ENCODE measurements at regions of chr2 and their contacts with region 1.

Region 1: GRCh38 chr2:219057709-219058540 is 2.8 kb downstream of the IHH start:
- DNase-seq: peak in 1 of 2 experiments; percentile 60
- ATAC-seq: peak; percentile 72 to 86
- H3K4me3 ChIP-seq: peak overlapping the region; percentile 53; the same call in 2 of the 3 replicates
- H3K27ac ChIP-seq: no peak overlapping the region
- H3K4me1 ChIP-seq: peaks cover 26% of the 10 kb centered on the region
- CTCF ChIP-seq: peak; percentile 80
- EP300 ChIP-seq: no peak
- POLR2A ChIP-seq: no peak
- RAD21 ChIP-seq: peak; percentile 80 to 91

Region 2: GRCh38 chr2:219029829-219030165 is 28.1 kb before region 1 on chr2:
- CTCF ChIA-PET with region 1: interaction called, 84 read pairs
- POLR2A ChIA-PET with region 1: no interaction called
- DNase-seq: peak; percentile 76 to 80
- ATAC-seq: peak; percentile 89 to 97; a peak in 5 of 6 replicates
- H3K4me3 ChIP-seq: no peak overlapping the region
- H3K27ac ChIP-seq: no peak overlapping the region
- H3K4me1 ChIP-seq: no peaks in the 10 kb centered on the region
- CTCF ChIP-seq: peak; percentile 88
- EP300 ChIP-seq: no peak
- POLR2A ChIP-seq: no peak
- RAD21 ChIP-seq: peak; percentile 82 to 87

Region 3: DNA sequence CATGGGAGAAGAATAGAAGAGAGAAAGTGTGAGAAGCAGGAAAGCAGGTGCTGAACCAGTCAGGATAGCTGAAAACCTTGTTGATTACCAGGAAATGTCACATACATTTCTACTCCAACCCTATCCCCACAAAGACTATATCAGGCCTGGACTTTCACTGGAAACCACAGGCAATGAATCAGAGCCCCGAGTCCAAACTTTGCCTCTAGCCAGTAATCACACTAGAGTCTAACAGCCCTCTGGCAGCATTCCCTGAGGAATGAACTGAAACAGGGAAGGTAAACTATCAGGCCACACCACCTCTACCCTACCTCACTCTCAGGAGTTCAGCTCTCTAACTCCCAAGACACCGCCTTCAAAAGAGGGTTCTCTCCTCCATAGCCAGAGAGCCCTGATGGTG is 21.5 kb after region 1 on chr2:
- CTCF ChIA-PET with region 1: interaction called, 182 read pairs
- POLR2A ChIA-PET with region 1: no interaction called
- DNase-seq: no peak
- ATAC-seq: no peak
- H3K4me3 ChIP-seq: no peak overlapping the region
- H3K27ac ChIP-seq: no peak overlapping the region
- H3K4me1 ChIP-seq: no peaks in the 10 kb centered on the region
- CTCF ChIP-seq: no peak
- EP300 ChIP-seq: no peak
- POLR2A ChIP-seq: no peak
- RAD21 ChIP-seq: no peak

Region 4: DNA sequence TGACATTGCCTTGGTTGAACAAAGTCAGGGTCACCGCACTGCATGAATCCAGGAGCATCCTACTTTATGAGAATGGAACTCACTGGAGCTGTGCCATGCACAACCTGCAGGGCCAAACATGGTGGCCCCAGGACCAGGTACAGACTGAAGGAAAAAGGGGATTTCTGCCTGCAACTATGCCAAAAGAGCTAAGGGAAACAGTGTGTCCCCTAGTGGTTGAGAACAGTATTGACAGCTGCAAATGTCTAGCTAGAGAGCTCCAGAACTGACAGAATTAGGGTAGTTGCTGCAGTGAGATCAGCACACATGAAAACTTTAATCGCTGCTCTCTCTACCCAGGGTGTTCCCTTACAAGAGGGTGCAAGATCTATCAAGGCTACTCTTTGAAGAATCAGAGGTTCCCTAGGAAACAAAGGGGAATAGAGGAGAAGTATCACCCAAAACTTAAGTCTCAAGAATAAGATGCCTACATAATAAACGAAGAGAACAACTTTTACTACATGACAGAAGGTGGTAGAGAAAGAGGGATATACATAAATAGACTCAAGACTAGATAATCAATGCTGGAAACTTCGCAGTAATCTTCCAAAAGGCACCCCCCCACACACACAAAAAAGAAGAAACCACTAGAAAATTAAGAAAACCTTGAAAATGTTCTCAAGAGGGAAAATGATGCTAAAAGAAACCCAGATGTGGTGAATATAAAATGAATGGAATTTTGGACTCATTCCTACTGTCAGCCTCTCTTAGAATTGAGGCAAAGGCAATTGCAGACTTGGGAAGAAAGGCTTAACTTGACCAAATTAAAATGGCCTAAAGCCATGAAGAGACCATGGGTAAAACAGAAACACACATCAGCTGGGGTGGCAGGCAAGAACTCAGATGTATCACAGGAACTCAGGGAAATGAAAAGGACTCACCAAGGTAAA is 46.4 kb after region 1 on chr2:
- CTCF ChIA-PET with region 1: interaction called, 13 read pairs
- POLR2A ChIA-PET with region 1: interaction called, 3 read pairs
- DNase-seq: peak; percentile 28 to 60
- ATAC-seq: peak; percentile 88 to 95
- H3K4me3 ChIP-seq: no peak overlapping the region
- H3K27ac ChIP-seq: no peak overlapping the region
- H3K4me1 ChIP-seq: no peaks in the 10 kb centered on the region
- CTCF ChIP-seq: peak; percentile 64
- EP300 ChIP-seq: no peak
- POLR2A ChIP-seq: no peak
- RAD21 ChIP-seq: peak; percentile 41 to 47; a peak in 4 of 5 replicates

Region 5: DNA sequence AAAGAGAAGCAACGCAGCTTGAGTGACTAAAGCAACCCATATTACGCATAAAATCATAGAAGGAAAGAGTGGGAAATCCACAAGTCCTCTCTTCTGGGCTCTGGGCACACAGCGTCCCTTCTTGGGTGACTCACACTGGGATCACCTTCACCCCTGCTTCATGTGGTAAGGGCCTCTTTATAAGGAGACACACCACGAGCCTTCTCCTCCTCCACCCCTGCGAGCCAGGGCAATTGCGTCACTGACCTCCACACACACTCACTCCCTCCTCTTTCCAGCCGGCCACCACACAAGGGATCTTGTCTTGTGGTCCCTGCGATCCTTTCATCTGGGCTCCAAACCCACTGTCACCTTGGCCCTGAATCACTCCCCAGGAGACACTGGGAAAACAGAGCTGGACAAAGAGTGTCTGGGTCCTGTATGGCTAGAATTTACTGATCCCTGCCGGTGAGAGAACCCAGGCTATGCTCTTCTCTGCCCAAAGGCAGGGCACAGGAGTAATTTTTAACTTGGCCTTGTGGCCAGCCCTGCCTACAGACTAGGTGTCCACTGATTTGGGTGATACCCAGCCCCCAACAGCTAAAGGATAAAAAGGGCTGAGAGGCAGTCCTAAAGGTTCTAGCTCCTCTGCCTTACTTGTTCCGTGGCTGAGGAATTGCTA is 67.4 kb after region 1 on chr2:
- CTCF ChIA-PET with region 1: interaction called, 173 read pairs
- POLR2A ChIA-PET with region 1: no interaction called
- DNase-seq: peak; percentile 31 to 57
- ATAC-seq: peak; percentile 71 to 80
- H3K4me3 ChIP-seq: no peak overlapping the region
- H3K27ac ChIP-seq: peak overlapping the region; percentile 69 to 73
- H3K4me1 ChIP-seq: peaks cover 37% of the 10 kb centered on the region
- CTCF ChIP-seq: no peak
- EP300 ChIP-seq: no peak
- POLR2A ChIP-seq: no peak
- RAD21 ChIP-seq: no peak

Region 6: DNA sequence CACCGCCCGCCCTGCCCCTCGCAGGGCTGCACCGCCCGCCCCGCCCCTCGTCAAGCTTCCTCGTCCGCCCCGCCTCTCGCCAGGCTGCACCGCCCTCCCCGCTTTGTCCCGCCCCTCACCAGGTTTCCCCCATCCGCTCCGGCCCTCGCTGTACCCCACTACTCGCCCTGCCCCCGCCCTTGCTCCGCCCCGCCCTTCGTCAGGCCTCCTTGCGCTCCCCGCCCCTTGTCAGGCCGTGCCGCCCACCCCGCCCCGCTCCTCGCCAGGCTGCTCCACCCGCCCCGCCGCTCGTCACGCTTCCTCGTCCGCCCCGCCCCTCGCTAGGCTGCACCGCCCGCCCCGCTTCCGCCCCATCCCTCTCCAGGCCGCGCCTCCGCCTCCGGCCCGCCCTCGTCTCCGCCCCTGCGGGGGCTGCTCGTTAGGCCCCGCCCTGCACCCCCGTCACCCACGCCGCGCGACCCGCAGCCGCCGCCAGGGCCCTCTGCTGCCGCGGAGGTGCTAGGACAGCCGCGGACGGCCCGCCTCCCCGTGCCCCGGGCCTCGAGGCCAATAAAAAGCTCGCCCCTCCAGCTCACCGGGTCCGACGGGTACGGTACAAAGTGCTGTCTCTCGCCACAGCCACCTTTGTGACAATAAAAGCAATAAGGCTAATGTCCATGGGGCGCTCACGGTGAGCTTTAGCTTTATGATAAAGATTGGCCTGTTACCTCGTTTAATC is 330.4 kb after region 1 on chr2:
- CTCF ChIA-PET with region 1: interaction called, 13 read pairs
- POLR2A ChIA-PET with region 1: no interaction called
- DNase-seq: peak; percentile 76 to 96
- ATAC-seq: peak; percentile 77 to 82
- H3K4me3 ChIP-seq: peak overlapping the region; percentile 99
- H3K27ac ChIP-seq: peak overlapping the region; percentile 75 to 96
- H3K4me1 ChIP-seq: peaks cover 9% of the 10 kb centered on the region
- CTCF ChIP-seq: peak; percentile 39; the same call in 2 of the 3 replicates
- EP300 ChIP-seq: no peak
- POLR2A ChIP-seq: no peak
- RAD21 ChIP-seq: peak in 1 of 2 experiments; percentile 38; a peak in 1 of 5 replicates